PC-3 (cell line): ENCODE measurements at regions of chr3 and their contacts with region 1.

Region 1: GRCh38 chr3:13895155-13896105 is 15.6 kb upstream of the WNT7A start:
- DNase-seq: peak; percentile 95
- ATAC-seq: peak; percentile 98
- H3K4me3 ChIP-seq: peak overlapping the region; percentile 79
- H3K27ac ChIP-seq: no peak overlapping the region
- H3K4me1 ChIP-seq: peaks cover 23% of the 10 kb centered on the region
- H3K27me3 ChIP-seq: no peaks in the 10 kb centered on the region
- CTCF ChIP-seq: no peak

Region 2: GRCh38 chr3:13866041-13866965 is 29.1 kb before region 1 on chr3:
- CTCF ChIA-PET with region 1: no interaction called
- POLR2A ChIA-PET with region 1: no interaction called
- intact Hi-C with region 1: no loop called
- DNase-seq: no peak
- ATAC-seq: no peak
- H3K4me3 ChIP-seq: no peak overlapping the region
- H3K27ac ChIP-seq: no peak overlapping the region
- H3K4me1 ChIP-seq: no peaks in the 10 kb centered on the region; the same call in 1 of the 2 replicates
- H3K27me3 ChIP-seq: no peaks in the 10 kb centered on the region
- CTCF ChIP-seq: no peak

Region 3: DNA sequence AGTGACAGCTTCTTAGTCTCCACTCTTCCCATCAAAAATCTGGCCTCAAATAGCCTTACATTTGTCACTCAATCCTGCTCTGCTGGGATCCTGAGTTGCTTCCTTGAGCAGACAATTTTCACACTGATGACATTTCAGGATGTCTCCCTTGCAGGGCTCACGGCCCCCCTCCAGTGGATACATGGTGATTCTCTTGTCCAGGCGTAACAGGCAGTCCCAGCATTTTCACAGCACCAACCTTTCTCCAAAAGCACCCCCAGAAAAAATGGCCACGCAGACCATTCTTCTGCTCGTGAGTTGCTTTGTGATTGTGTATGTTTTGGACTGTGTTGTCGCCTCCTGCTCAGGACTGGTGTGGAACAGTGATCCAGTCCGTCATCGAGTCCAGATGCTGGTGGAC is 31.9 kb after region 1 on chr3:
- CTCF ChIA-PET with region 1: no interaction called
- POLR2A ChIA-PET with region 1: no interaction called
- intact Hi-C with region 1: loop called (anchors 1 kb)
- DNase-seq: peak; percentile 44
- ATAC-seq: peak; percentile 90
- H3K4me3 ChIP-seq: no peak overlapping the region
- H3K27ac ChIP-seq: no peak overlapping the region
- H3K4me1 ChIP-seq: no peaks in the 10 kb centered on the region
- H3K27me3 ChIP-seq: no peaks in the 10 kb centered on the region
- CTCF ChIP-seq: peak; percentile 64

Region 4: DNA sequence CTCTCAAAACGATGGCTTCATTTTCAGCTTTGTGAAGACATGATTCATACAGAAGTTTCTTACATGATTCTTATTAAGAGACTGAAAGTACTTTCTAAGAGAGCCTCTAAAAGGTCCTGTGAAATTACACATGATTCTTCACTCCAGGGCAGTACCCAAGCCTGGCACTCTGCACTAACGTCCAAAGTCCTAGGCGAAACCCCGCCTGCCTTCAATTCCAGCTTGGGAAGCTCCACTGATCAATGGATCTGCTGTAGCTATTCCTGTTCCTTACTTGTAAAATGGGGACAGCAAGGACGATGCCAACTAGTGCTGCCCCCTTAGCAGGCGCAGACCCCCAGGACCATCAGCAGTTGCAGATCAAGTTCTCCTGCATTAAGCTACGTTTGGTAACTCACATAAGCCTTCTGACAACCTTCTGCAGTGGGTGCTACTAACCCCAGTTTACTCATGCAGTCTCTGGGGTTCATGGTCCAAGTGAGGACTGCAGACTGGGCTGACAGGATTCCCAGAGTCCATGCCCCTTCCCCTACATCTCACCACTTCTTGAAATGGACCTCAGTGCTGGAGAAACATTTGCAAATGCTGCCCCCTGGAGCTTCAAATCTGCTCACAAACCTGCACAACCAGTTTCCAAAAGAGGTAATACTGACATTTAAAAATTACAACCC is 218.7 kb after region 1 on chr3:
- CTCF ChIA-PET with region 1: interaction called, 15 read pairs
- POLR2A ChIA-PET with region 1: no interaction called
- intact Hi-C with region 1: loop called (anchors 1 kb)
- DNase-seq: peak; percentile 67
- ATAC-seq: peak; percentile 54
- H3K4me3 ChIP-seq: no peak overlapping the region
- H3K27ac ChIP-seq: no peak overlapping the region
- H3K4me1 ChIP-seq: peaks cover 15% of the 10 kb centered on the region
- H3K27me3 ChIP-seq: no peaks in the 10 kb centered on the region
- CTCF ChIP-seq: peak; percentile 86

Region 5: GRCh38 chr3:14178247-14179113 is 283.1 kb after region 1 on chr3 and contains the starts of genes LSM3 and XPC:
- CTCF ChIA-PET with region 1: interaction called, 4 read pairs
- POLR2A ChIA-PET with region 1: no interaction called
- intact Hi-C with region 1: loop called (anchors 1 kb)
- DNase-seq: peak; percentile 99
- ATAC-seq: peak; percentile 95
- H3K4me3 ChIP-seq: peak within 1 kb of the TSS; percentile 74
- H3K27ac ChIP-seq: peak within 1 kb of the TSS; percentile 39
- H3K4me1 ChIP-seq: peaks cover 31% of the 10 kb centered on the region
- H3K27me3 ChIP-seq: no peaks in the 10 kb centered on the region
- CTCF ChIP-seq: no peak
- total RNA-seq, gene LSM3: 22.0 and 27.2 TPM in 2 replicates
- total RNA-seq, gene XPC: 24.3 and 26.1 TPM in 2 replicates